B cell (primary cell): ENCODE measurements at regions of chr3 and their contacts with region 1.

Region 1: DNA sequence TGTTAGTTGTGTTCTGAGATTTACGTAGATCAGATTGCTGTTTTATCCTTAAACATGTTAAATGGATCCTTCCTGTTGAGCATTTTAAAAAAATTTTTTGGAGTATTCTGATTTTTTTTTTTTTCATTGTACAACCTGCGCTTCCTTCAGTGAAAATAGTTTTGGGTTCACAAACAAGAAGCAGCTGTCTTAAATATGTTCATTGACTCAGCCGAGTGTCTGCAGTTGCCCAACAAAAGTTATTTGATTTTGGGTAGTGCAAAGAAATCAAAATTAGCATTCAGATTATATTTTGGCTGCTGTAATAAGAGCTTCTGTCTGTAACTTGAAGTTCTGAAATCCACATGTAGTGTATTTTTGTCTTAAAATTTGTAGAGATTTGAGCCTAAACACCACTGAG is 148.2 kb downstream of the BBX start:
- DNase-seq: no peak
- ATAC-seq: no peak
- H3K4me3 ChIP-seq: no peak overlapping the region
- H3K4me3 Mint-ChIP-seq: no peak overlapping the region
- H3K27ac ChIP-seq: no peak overlapping the region
- H3K27ac Mint-ChIP-seq: peak overlapping the region; percentile 26
- H3K4me1 ChIP-seq: peaks cover 16 to 18% of the 10 kb centered on the region in 2 donors
- H3K4me1 Mint-ChIP-seq: peaks cover 40% of the 10 kb centered on the region
- H3K27me3 ChIP-seq: no peaks in the 10 kb centered on the region
- H3K27me3 Mint-ChIP-seq: no peaks in the 10 kb centered on the region
- CTCF ChIP-seq: no peak

Region 2: GRCh38 chr3:107660306-107660976 is 10.5 kb before region 1 on chr3:
- CTCF ChIA-PET with region 1: interaction called, 113 read pairs
- POLR2A ChIA-PET with region 1: interaction called, 5 read pairs
- intact Hi-C with region 1: no loop called
- DNase-seq: peak; percentile 51
- ATAC-seq: no peak
- H3K4me3 ChIP-seq: no peak overlapping the region
- H3K4me3 Mint-ChIP-seq: no peak overlapping the region
- H3K27ac ChIP-seq: no peak overlapping the region
- H3K27ac Mint-ChIP-seq: no peak overlapping the region
- H3K4me1 ChIP-seq: peaks cover 8% of the 10 kb centered on the region in 2 donors
- H3K4me1 Mint-ChIP-seq: peaks cover 25% of the 10 kb centered on the region
- H3K27me3 ChIP-seq: no peaks in the 10 kb centered on the region
- H3K27me3 Mint-ChIP-seq: no peaks in the 10 kb centered on the region
- CTCF ChIP-seq: peak; percentile 83

Region 3: GRCh38 chr3:107690522-107691138 is 19.6 kb after region 1 on chr3:
- CTCF ChIA-PET with region 1: interaction called, 89 read pairs
- POLR2A ChIA-PET with region 1: interaction called, 9 read pairs
- intact Hi-C with region 1: no loop called
- DNase-seq: peak; percentile 66
- ATAC-seq: peak; percentile 64
- H3K4me3 ChIP-seq: no peak overlapping the region
- H3K4me3 Mint-ChIP-seq: no peak overlapping the region
- H3K27ac ChIP-seq: no peak overlapping the region
- H3K27ac Mint-ChIP-seq: no peak overlapping the region
- H3K4me1 ChIP-seq: peaks cover 0 to 2% of the 10 kb centered on the region in 2 donors
- H3K4me1 Mint-ChIP-seq: peaks cover 6% of the 10 kb centered on the region
- H3K27me3 ChIP-seq: no peaks in the 10 kb centered on the region
- H3K27me3 Mint-ChIP-seq: no peaks in the 10 kb centered on the region
- CTCF ChIP-seq: peak; percentile 70

Region 4: GRCh38 chr3:108342837-108343478 is 672.0 kb after region 1 on chr3:
- CTCF ChIA-PET with region 1: no interaction called
- POLR2A ChIA-PET with region 1: no interaction called
- intact Hi-C with region 1: no loop called
- DNase-seq: no peak
- ATAC-seq: no peak
- H3K4me3 ChIP-seq: no peak overlapping the region
- H3K4me3 Mint-ChIP-seq: no peak overlapping the region
- H3K27ac ChIP-seq: no peak overlapping the region
- H3K27ac Mint-ChIP-seq: no peak overlapping the region
- H3K4me1 ChIP-seq: peaks cover 34 to 43% of the 10 kb centered on the region in 2 donors
- H3K4me1 Mint-ChIP-seq: peaks cover 44% of the 10 kb centered on the region
- H3K27me3 ChIP-seq: no peaks in the 10 kb centered on the region
- H3K27me3 Mint-ChIP-seq: no peaks in the 10 kb centered on the region
- CTCF ChIP-seq: no peak